Left colon (tissue), 2 donors: ENCODE measurements at regions of chr19 and their contacts with region 1.

Region 1: GRCh38 chr19:6767357-6768235 is at the start of gene SH2D3A:
- DNase-seq: peak; percentile 96 to 97
- ATAC-seq: peak; percentile 82
- total RNA-seq, gene SH2D3A: 46.7 to 52.1 TPM

Region 2: DNA sequence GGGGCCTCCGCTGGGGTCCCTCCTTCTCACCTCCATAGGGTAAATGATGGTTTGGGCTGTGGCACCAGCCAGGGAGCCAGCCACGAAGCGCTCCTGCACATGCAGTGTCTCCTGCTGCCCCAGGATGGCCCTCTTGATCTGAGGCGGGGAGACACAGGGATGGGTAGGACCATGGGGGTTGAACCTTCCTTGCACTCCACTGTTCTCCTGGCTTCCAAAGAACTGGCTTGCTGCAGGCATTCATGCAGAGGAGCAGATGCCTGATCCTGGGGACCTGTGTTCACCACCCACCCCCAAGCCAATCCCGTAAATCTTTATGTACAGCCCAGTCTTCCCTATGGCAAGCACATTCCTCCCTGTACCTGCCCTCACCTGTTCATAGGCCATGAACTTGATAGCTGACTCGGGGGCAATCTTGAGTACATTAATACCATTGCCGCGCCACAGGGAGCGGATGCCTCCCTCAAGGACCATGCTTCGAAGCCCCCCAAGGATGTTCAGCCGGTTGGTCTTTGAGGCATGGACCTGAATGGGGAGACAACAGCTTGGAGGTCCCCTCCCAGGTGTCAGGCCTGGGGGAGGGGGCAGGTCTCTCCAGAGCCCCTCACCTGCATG is 313.5 kb before region 1 on chr19:
- intact Hi-C with region 1: no loop called
- DNase-seq: no peak
- ATAC-seq: no peak

Region 3: DNA sequence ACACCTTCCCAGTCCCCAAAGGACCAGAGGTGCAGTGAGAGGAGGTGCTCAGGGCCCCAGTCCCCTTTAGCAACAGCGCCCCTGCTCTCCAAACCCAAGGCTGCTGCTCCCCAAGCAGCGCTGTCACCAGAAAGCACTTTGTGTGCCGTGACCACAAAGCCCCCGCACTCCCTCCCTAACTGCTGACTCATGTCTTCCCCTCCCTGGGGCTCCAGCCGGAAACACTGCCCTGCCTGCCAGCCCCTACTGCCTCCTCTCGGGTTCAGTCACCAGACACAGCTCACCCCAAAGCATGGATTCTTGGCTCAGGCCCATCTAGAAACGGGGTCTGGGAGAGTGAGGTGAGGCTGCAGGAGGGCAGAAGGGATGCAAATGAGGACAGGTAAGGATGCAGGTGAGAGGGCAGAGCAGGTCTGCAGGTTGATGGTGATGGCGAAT is 92.7 kb before region 1 on chr19:
- intact Hi-C with region 1: no loop called
- DNase-seq: peak; percentile 59 to 71
- ATAC-seq: peak; percentile 27

Region 4: GRCh38 chr19:6862673-6863078 is 95.1 kb after region 1 on chr19:
- intact Hi-C with region 1: loop called in 1 of 2 experiments (anchors 2 kb)
- DNase-seq: peak; percentile 74 to 82
- ATAC-seq: peak; percentile 78